H1 (cell line): ENCODE measurements at regions of chr10 and their contacts with region 1.

Region 1: GRCh38 chr10:63629363-63630084 is 108.3 kb downstream of the REEP3 start:
- DNase-seq: peak; percentile 90 to 96
- H3K4me3 ChIP-seq: peak overlapping the region; percentile 60 to 80 (median 72)
- H3K27ac ChIP-seq: peak overlapping the region; percentile 91
- H3K4me1 ChIP-seq: peaks cover 11 to 16% (median 13%) of the 10 kb centered on the region in 4 experiments; a peak in 6 of 7 replicates
- H3K27me3 ChIP-seq: no peaks in the 10 kb centered on the region
- CTCF ChIP-seq: peak; percentile 81 to 96 (median 92)
- EP300 ChIP-seq: peak in 1 of 2 experiments; percentile 5; a peak in 1 of 3 replicates
- POLR2A ChIP-seq: peak in 1 of 2 experiments; percentile 15; a peak in 1 of 3 replicates
- RAD21 ChIP-seq: peak; percentile 94 to 95

Region 2: GRCh38 chr10:63217120-63217605 is 412.4 kb before region 1 on chr10:
- CTCF ChIA-PET with region 1: interaction called, 10 read pairs
- POLR2A ChIA-PET with region 1: no interaction called
- DNase-seq: no peak
- H3K4me3 ChIP-seq: no peak overlapping the region
- H3K27ac ChIP-seq: no peak overlapping the region
- H3K4me1 ChIP-seq: peaks cover 0 to 6% (median 0%) of the 10 kb centered on the region in 4 experiments; a peak in 1 of 7 replicates
- H3K27me3 ChIP-seq: no peaks in the 10 kb centered on the region
- CTCF ChIP-seq: peak in 2 of 3 experiments; percentile 26 to 36; a peak in 2 of 4 replicates
- EP300 ChIP-seq: no peak
- POLR2A ChIP-seq: no peak
- RAD21 ChIP-seq: peak; percentile 54 to 63

Region 3: GRCh38 chr10:63504125-63504880 is 125.2 kb before region 1 on chr10:
- CTCF ChIA-PET with region 1: interaction called, 6 read pairs
- POLR2A ChIA-PET with region 1: interaction called, 15 read pairs
- DNase-seq: no peak
- H3K4me3 ChIP-seq: peak overlapping the region in 1 of 4 experiments; percentile 15; a peak in 1 of 8 replicates
- H3K27ac ChIP-seq: peak overlapping the region; percentile 29; the same call in 1 of the 2 replicates
- H3K4me1 ChIP-seq: peaks cover 0 to 18% (median 12%) of the 10 kb centered on the region in 4 experiments; a peak in 6 of 7 replicates
- H3K27me3 ChIP-seq: no peaks in the 10 kb centered on the region
- CTCF ChIP-seq: no peak
- EP300 ChIP-seq: no peak
- POLR2A ChIP-seq: no peak
- RAD21 ChIP-seq: no peak

Region 4: GRCh38 chr10:63619426-63619825 is 10.1 kb before region 1 on chr10:
- CTCF ChIA-PET with region 1: interaction called, 8 read pairs
- POLR2A ChIA-PET with region 1: interaction called, 12 read pairs
- DNase-seq: no peak
- H3K4me3 ChIP-seq: no peak overlapping the region
- H3K27ac ChIP-seq: no peak overlapping the region
- H3K4me1 ChIP-seq: peaks cover 0 to 3% (median 1%) of the 10 kb centered on the region in 4 experiments; a peak in 1 of 7 replicates
- H3K27me3 ChIP-seq: no peaks in the 10 kb centered on the region
- CTCF ChIP-seq: no peak
- EP300 ChIP-seq: no peak
- POLR2A ChIP-seq: no peak
- RAD21 ChIP-seq: no peak

Region 5: GRCh38 chr10:63651864-63652263 is 22.3 kb after region 1 on chr10:
- CTCF ChIA-PET with region 1: no interaction called
- POLR2A ChIA-PET with region 1: no interaction called
- DNase-seq: no peak
- H3K4me3 ChIP-seq: no peak overlapping the region
- H3K27ac ChIP-seq: no peak overlapping the region
- H3K4me1 ChIP-seq: no peaks in the 10 kb centered on the region
- H3K27me3 ChIP-seq: no peaks in the 10 kb centered on the region
- CTCF ChIP-seq: no peak
- EP300 ChIP-seq: no peak
- POLR2A ChIP-seq: no peak
- RAD21 ChIP-seq: no peak

Region 6: GRCh38 chr10:63670291-63670898 is 40.9 kb after region 1 on chr10:
- CTCF ChIA-PET with region 1: interaction called, 4 read pairs
- POLR2A ChIA-PET with region 1: interaction called, 10 read pairs
- DNase-seq: no peak
- H3K4me3 ChIP-seq: peak overlapping the region in 1 of 4 experiments; percentile 2; a peak in 1 of 8 replicates
- H3K27ac ChIP-seq: no peak overlapping the region
- H3K4me1 ChIP-seq: peaks cover 3 to 20% (median 17%) of the 10 kb centered on the region in 4 experiments; a peak in 6 of 7 replicates
- H3K27me3 ChIP-seq: no peaks in the 10 kb centered on the region
- CTCF ChIP-seq: no peak
- EP300 ChIP-seq: no peak
- POLR2A ChIP-seq: no peak
- RAD21 ChIP-seq: no peak

Region 7: GRCh38 chr10:63836666-63837442 is 207.3 kb after region 1 on chr10:
- CTCF ChIA-PET with region 1: no interaction called
- POLR2A ChIA-PET with region 1: no interaction called
- DNase-seq: no peak
- H3K4me3 ChIP-seq: no peak overlapping the region
- H3K27ac ChIP-seq: no peak overlapping the region
- H3K4me1 ChIP-seq: no peaks in the 10 kb centered on the region
- H3K27me3 ChIP-seq: no peaks in the 10 kb centered on the region; a peak in 1 of 7 replicates
- CTCF ChIP-seq: no peak
- EP300 ChIP-seq: no peak
- POLR2A ChIP-seq: no peak
- RAD21 ChIP-seq: no peak